Panc1 (cell line): ENCODE measurements at regions of chr5 and their contacts with region 1.

Region 1: GRCh38 chr5:79020861-79021561 is 35.9 kb upstream of the ARSB start:
- DNase-seq: peak; percentile 42
- ATAC-seq: peak; percentile 87
- H3K4me3 ChIP-seq: no peak overlapping the region
- H3K27ac ChIP-seq: no peak overlapping the region
- H3K4me1 ChIP-seq: 0 out of 2 replicates have a peak, but pooled peaks cover 3% of the 10 kb centered on the region
- H3K27me3 ChIP-seq: peaks cover 39% of the 10 kb centered on the region; the same call in 1 of the 2 replicates
- CTCF ChIP-seq: peak; percentile 93

Region 2: GRCh38 chr5:79109527-79110492 is 88.8 kb after region 1 on chr5:
- CTCF ChIA-PET with region 1: no interaction called
- POLR2A ChIA-PET with region 1: no interaction called
- in situ Hi-C with region 1: no loop called
- intact Hi-C with region 1: loop called (anchors 5 kb)
- DNase-seq: peak; percentile 2
- ATAC-seq: no peak
- H3K4me3 ChIP-seq: no peak overlapping the region
- H3K27ac ChIP-seq: no peak overlapping the region
- H3K4me1 ChIP-seq: no peaks in the 10 kb centered on the region
- H3K27me3 ChIP-seq: peaks cover 30% of the 10 kb centered on the region
- CTCF ChIP-seq: peak; percentile 74

Region 3: DNA sequence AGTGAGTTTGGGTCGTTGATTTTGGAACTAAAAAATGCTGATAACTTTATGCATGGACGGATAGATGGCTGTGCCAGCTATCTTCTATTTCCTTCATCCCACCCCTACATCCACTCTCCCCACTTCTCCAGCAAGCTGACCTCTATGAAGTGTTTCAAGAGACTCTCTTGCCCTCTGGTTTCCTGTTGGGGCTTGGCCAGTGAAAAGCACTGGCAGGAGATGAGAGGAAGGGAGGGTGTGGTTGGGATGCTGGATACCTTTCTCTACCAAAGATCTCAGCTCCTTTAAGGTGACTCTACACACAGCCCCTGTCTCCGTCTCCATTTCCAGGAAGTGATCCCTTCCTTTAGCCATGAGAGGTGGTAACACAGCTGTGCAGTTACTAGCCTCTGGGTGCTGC is 185.0 kb after region 1 on chr5:
- CTCF ChIA-PET with region 1: no interaction called
- POLR2A ChIA-PET with region 1: no interaction called
- in situ Hi-C with region 1: no loop called
- intact Hi-C with region 1: no loop called
- DNase-seq: no peak
- ATAC-seq: no peak
- H3K4me3 ChIP-seq: no peak overlapping the region
- H3K27ac ChIP-seq: no peak overlapping the region
- H3K4me1 ChIP-seq: no peaks in the 10 kb centered on the region
- H3K27me3 ChIP-seq: no peaks in the 10 kb centered on the region
- CTCF ChIP-seq: no peak

Region 4: GRCh38 chr5:79235634-79236363 is 214.8 kb after region 1 on chr5 and contains the start of gene JMY:
- CTCF ChIA-PET with region 1: no interaction called
- POLR2A ChIA-PET with region 1: no interaction called
- in situ Hi-C with region 1: no loop called
- intact Hi-C with region 1: no loop called
- DNase-seq: no peak
- ATAC-seq: peak; percentile 89
- H3K4me3 ChIP-seq: peak within 1 kb of the TSS; percentile 76 to 84
- H3K27ac ChIP-seq: peak within 1 kb of the TSS; percentile 90
- H3K4me1 ChIP-seq: peaks cover 4% of the 10 kb centered on the region
- H3K27me3 ChIP-seq: no peaks in the 10 kb centered on the region
- CTCF ChIP-seq: no peak; the same call in 1 of the 2 replicates
- total RNA-seq, gene JMY: 6.1 TPM

Region 5: GRCh38 chr5:79464695-79465332 is 443.8 kb after region 1 on chr5:
- CTCF ChIA-PET with region 1: interaction called, 6 read pairs
- POLR2A ChIA-PET with region 1: no interaction called
- in situ Hi-C with region 1: no loop called
- intact Hi-C with region 1: loop called (anchors 5 kb)
- DNase-seq: no peak
- ATAC-seq: peak; percentile 76
- H3K4me3 ChIP-seq: no peak overlapping the region
- H3K27ac ChIP-seq: no peak overlapping the region
- H3K4me1 ChIP-seq: no peaks in the 10 kb centered on the region
- H3K27me3 ChIP-seq: no peaks in the 10 kb centered on the region
- CTCF ChIP-seq: peak; percentile 69

Region 6: DNA sequence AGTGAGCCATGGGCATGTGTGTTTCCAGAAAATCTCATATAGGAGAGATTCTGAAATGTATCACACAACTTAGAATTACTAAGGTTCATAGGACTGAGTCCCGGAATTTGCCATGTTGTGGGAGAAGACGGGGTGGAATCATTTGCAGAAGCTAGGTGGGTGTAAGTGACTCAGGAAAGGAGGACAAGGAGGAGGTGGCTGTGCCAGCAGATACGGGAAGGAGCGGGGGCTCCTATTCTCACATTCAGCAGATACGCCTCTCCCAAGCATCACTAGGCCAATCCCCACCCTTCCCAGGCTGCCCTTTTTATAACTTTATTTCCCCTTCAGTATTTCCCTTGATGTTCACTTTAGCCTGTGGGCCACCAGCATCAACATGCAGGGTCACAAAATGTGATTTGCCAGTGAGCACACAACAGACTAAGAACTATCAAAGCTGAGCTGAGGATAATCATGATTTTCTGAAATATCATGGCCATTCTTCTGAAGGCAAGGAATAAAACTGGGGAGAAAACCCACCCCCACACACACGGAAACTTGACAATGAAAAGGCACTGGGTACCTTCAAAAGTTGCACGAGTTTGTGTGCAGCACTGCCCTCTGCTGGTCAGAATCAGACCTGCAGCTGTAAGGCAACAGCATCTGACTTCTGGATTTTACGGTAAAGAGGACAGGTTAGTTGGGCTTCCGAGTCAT is 836.9 kb after region 1 on chr5:
- CTCF ChIA-PET with region 1: no interaction called
- POLR2A ChIA-PET with region 1: no interaction called
- in situ Hi-C with region 1: no loop called
- intact Hi-C with region 1: loop called (anchors 10 kb)
- DNase-seq: peak; percentile 67
- ATAC-seq: peak; percentile 72; the same call in 1 of the 2 replicates
- H3K4me3 ChIP-seq: no peak overlapping the region
- H3K27ac ChIP-seq: no peak overlapping the region
- H3K4me1 ChIP-seq: no peaks in the 10 kb centered on the region
- H3K27me3 ChIP-seq: peaks cover 15% of the 10 kb centered on the region
- CTCF ChIP-seq: peak; percentile 95

Region 7: GRCh38 chr5:80083101-80083890 is 1062.3 kb after region 1 on chr5:
- CTCF ChIA-PET with region 1: interaction called, 11 read pairs
- POLR2A ChIA-PET with region 1: no interaction called
- in situ Hi-C with region 1: no loop called
- intact Hi-C with region 1: no loop called
- DNase-seq: peak; percentile 15
- ATAC-seq: peak; percentile 83
- H3K4me3 ChIP-seq: peak overlapping the region in 1 of 2 experiments; percentile 14; a peak in 2 of 4 replicates
- H3K27ac ChIP-seq: no peak overlapping the region
- H3K4me1 ChIP-seq: no peaks in the 10 kb centered on the region
- H3K27me3 ChIP-seq: peaks cover 2% of the 10 kb centered on the region; the same call in 1 of the 2 replicates
- CTCF ChIP-seq: peak; percentile 76